GM18951 (cell line): ENCODE measurements at regions of chr7 and their contacts with region 1.

Region 1: DNA sequence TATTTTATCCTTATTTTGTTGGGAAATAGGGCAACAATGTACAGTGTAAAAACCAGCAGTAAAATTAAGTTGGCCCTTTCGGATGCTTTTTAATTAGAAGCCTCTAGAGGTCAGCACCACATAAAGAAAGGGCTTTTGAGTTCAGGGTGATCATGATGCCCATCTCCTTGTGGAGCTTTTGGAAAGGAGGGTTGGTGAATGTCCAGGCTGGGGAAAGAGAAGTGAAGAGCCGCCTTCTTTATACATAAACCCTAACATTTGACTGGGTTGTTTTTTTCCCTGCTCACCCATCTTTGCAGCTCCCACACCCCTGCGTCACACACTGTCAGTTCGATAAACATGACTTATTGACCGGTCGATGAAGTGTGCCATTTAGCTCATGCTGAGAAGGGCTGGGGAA is 29.8 kb downstream of the MTURN start:
- POLR2A ChIP-seq: no peak

Region 2: DNA sequence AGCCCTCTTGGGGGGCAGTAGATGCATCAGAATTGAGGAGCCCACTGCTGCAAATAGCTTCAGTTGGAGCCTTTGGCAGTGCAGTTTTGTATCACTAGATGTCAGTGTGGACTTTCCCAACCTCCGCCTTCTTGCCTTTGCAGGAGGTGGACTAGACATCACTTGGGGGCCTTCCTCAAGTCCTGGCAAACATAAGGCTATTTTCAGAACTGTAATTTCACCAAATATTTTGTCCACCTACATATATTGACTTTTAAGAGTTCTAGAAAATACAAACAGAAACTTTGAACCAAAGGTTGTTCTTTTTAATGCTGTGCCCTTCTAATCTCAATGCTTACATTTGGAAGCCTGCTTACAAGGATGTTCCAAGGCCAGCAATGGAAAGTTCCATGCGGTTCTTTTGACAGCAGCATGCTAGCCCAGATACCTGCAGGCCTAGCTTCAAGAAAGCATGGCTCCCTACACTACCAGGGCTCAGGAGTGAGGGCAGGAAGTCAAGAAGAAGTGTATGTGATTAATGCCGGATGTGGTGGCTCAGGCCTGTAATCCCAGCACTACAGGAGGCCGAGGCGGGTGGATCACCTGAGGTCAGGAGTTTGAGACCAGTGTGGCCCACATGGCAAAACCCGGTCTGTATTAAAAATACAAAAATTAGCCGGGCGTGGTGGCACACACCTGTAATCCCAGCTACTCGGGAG is 111.8 kb after region 1 on chr7:
- in situ Hi-C with region 1: loop called (anchors 10 kb)
- POLR2A ChIP-seq: no peak